ENCODE measurements at regions of chr1 and their contacts with region 1.

Region 1: DNA sequence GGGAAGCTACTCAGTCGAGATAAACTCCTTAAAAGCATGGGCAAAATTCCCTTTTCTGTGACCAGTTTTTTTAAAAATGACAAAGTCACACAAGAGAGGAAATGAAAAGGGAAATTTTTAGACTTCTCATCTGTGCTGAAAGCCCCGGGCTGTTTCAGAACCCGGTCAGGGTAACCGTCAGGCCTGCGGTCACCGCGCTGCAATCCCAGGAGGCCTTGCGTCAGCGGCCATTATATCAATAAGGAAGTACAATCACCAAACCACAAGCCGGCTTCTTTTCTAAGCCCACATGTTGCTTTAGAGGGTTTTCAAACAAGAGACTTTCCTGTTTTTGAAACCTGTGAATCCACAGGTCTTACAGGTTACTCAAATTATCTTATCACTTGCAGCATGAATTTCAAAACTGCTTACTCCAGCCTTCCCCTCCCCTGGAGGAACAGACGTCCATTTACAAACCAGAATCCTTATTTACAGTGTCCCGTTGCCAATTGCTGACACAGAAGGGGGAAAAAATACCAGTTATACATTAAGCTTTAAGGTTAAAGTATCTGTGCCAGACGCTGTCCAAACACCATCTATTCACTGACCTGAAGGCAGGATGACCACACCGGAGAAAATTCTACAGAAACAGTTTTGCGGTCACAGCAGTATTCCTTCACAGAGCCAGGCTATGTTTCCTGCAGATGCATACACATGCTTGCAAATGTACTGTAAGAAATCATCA is 165.3 kb downstream of the TOMM20 start:
- DNase-seq: peak; percentile 96
- ATAC-seq: peak; percentile 81
- H3K4me3 Mint-ChIP-seq: peak overlapping the region; percentile 45
- H3K27ac Mint-ChIP-seq: peak overlapping the region; percentile 96
- H3K4me1 Mint-ChIP-seq: peaks cover 76% of the 10 kb centered on the region
- H3K27me3 Mint-ChIP-seq: no peaks in the 10 kb centered on the region

Region 2: GRCh38 chr1:234722904-234723720 is 240.2 kb before region 1 on chr1:
- CTCF ChIA-PET with region 1: interaction called, 3 read pairs
- POLR2A ChIA-PET with region 1: interaction called, 3 read pairs
- intact Hi-C with region 1: loop called (anchors 1 to 5 kb)
- DNase-seq: peak; percentile 92
- ATAC-seq: peak; percentile 68
- H3K4me3 Mint-ChIP-seq: peak overlapping the region; percentile 64
- H3K27ac Mint-ChIP-seq: peak overlapping the region; percentile 97
- H3K4me1 Mint-ChIP-seq: peaks cover 66% of the 10 kb centered on the region
- H3K27me3 Mint-ChIP-seq: no peaks in the 10 kb centered on the region

Region 3: GRCh38 chr1:234772345-234773147 is 190.8 kb before region 1 on chr1:
- CTCF ChIA-PET with region 1: no interaction called
- POLR2A ChIA-PET with region 1: no interaction called
- intact Hi-C with region 1: loop called (anchors 1 to 2 kb)
- DNase-seq: peak; percentile 95
- ATAC-seq: peak; percentile 78
- H3K4me3 Mint-ChIP-seq: peak overlapping the region; percentile 45
- H3K27ac Mint-ChIP-seq: peak overlapping the region; percentile 95
- H3K4me1 Mint-ChIP-seq: peaks cover 59% of the 10 kb centered on the region
- H3K27me3 Mint-ChIP-seq: peaks cover 1% of the 10 kb centered on the region

Region 4: GRCh38 chr1:234881893-234882771 is 81.2 kb before region 1 on chr1:
- CTCF ChIA-PET with region 1: no interaction called
- POLR2A ChIA-PET with region 1: no interaction called
- intact Hi-C with region 1: loop called in 1 of 2 experiments (anchors 5 kb)
- DNase-seq: peak; percentile 46
- ATAC-seq: peak; percentile 83
- H3K4me3 Mint-ChIP-seq: no peak overlapping the region
- H3K27ac Mint-ChIP-seq: no peak overlapping the region
- H3K4me1 Mint-ChIP-seq: peaks cover 42% of the 10 kb centered on the region
- H3K27me3 Mint-ChIP-seq: no peaks in the 10 kb centered on the region

Region 5: GRCh38 chr1:234936612-234937389 is 26.5 kb before region 1 on chr1:
- CTCF ChIA-PET with region 1: no interaction called
- POLR2A ChIA-PET with region 1: no interaction called
- intact Hi-C with region 1: loop called in 1 of 2 experiments (anchors 2 kb)
- DNase-seq: no peak
- ATAC-seq: peak; percentile 63
- H3K4me3 Mint-ChIP-seq: no peak overlapping the region
- H3K27ac Mint-ChIP-seq: peak overlapping the region; percentile 70
- H3K4me1 Mint-ChIP-seq: peaks cover 48% of the 10 kb centered on the region
- H3K27me3 Mint-ChIP-seq: no peaks in the 10 kb centered on the region

Region 6: DNA sequence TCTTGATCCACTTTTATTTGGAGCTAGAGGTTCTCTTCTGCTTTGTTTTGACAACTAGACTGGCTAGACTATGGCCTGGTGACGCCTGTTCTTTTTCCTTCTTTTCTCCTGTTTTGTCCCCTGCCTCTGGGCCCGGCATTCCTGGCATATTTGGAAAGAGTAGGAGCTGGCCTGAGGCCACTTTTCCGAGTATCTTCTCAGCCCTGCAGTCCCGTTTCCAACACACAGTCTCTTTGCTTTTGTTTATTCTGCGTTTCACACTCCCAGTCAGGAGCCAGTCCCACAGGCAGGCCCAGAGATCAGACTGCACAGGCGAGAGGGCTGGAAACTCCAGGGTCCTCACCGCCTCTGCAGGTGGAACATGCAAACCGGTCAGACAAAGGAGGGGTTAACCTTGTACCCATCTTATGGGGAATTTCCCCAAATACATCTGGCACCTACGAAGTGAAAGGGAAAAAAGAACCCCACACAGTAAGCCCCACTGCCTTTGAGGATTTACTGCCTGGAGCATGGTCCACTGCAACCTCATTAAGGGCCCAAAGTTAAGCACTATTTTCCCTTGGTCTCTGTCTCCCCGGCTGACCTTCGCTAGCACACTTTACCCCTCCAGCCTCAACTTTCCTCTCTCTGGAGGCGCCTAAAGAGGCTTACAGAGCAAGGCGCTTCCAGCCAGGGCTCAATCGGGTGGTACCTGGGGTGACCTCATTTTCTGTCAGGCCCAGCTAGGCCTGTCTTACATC is 24.2 kb after region 1 on chr1:
- CTCF ChIA-PET with region 1: no interaction called
- POLR2A ChIA-PET with region 1: interaction called, 10 read pairs
- intact Hi-C with region 1: loop called in 1 of 2 experiments (anchors 2 kb)
- DNase-seq: no peak
- ATAC-seq: peak; percentile 11
- H3K4me3 Mint-ChIP-seq: peak overlapping the region; percentile 5
- H3K27ac Mint-ChIP-seq: peak overlapping the region; percentile 86
- H3K4me1 Mint-ChIP-seq: peaks cover 67% of the 10 kb centered on the region
- H3K27me3 Mint-ChIP-seq: no peaks in the 10 kb centered on the region

Region 7: DNA sequence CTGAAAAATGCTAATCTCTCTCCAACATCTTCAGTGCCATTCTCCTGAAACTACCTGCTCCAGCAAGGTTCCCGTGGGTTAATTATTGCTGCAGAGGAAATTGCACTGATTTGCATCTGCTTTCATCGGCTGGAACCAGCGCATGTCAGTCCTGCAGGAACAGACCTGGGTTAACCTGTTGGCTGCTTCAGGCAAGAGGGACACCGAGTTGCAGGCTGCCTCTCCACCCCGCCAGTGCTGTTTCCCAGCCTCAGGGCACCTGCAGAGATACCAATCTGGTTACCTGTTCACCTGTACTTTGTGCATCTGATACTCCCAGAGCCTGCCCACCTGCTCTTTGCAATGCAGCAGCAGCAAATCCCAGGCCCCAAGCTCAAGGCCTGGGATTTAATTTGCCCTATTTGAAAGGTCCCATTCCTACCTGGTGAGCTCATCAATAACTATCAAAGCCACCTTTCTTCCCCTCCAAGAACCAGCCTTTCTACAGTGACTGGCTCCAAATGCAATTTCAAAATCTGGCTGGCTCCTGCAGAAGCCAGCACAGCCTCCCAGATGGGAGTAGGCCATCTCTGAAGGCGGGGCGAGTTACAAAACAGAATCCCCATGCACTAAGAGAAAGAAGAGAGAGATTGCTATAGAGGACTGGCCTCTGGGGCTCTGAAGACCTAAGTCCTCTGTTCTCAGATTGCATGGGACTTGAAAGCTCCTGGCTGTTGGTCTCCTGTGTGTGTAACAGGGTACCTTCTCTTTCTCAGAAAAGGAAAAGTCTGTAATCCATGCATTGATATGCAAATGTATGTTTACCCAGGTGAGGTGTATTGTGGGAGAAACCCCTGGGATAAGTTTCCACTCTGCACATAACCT is 97.5 kb after region 1 on chr1:
- CTCF ChIA-PET with region 1: no interaction called
- POLR2A ChIA-PET with region 1: no interaction called
- intact Hi-C with region 1: no loop called
- DNase-seq: no peak
- ATAC-seq: no peak
- H3K4me3 Mint-ChIP-seq: no peak overlapping the region
- H3K27ac Mint-ChIP-seq: no peak overlapping the region
- H3K4me1 Mint-ChIP-seq: peaks cover 20% of the 10 kb centered on the region
- H3K27me3 Mint-ChIP-seq: no peaks in the 10 kb centered on the region